ENCODE measurements at regions of chr12 and their contacts with region 1.

Region 1: GRCh38 chr12:10364815-10365622 is 24.8 kb downstream of the KLRK1 start:
- DNase-seq: peak; percentile 40 to 83 (median 76)
- H3K4me3 ChIP-seq: peak overlapping the region; percentile 97
- H3K4me3 Mint-ChIP-seq: no peak overlapping the region
- H3K27ac ChIP-seq: peak overlapping the region; percentile 80
- H3K27ac Mint-ChIP-seq: no peak overlapping the region
- H3K4me1 ChIP-seq: peaks cover 58% of the 10 kb centered on the region
- H3K4me1 Mint-ChIP-seq: peaks cover 24 to 35% (median 25%) of the 10 kb centered on the region in 3 donors
- H3K27me3 ChIP-seq: no peaks in the 10 kb centered on the region
- H3K27me3 Mint-ChIP-seq: no peaks in the 10 kb centered on the region

Region 2: GRCh38 chr12:10235761-10236631 is 129.0 kb before region 1 on chr12:
- CTCF ChIA-PET with region 1: interaction called, 14 read pairs
- POLR2A ChIA-PET with region 1: interaction called, 3 read pairs
- DNase-seq: peak; percentile 12 to 63 (median 37)
- H3K4me3 ChIP-seq: no peak overlapping the region
- H3K4me3 Mint-ChIP-seq: peak overlapping the region; percentile 13 to 60 (median 41)
- H3K27ac ChIP-seq: no peak overlapping the region
- H3K27ac Mint-ChIP-seq: peak overlapping the region in 7 of 8 donors; percentile 28 to 85 (median 71)
- H3K4me1 ChIP-seq: peaks cover 5% of the 10 kb centered on the region
- H3K4me1 Mint-ChIP-seq: peaks cover 21 to 51% (median 45%) of the 10 kb centered on the region in 3 donors
- H3K27me3 ChIP-seq: no peaks in the 10 kb centered on the region
- H3K27me3 Mint-ChIP-seq: no peaks in the 10 kb centered on the region

Region 3: GRCh38 chr12:10385166-10385613 is 20.2 kb after region 1 on chr12:
- CTCF ChIA-PET with region 1: interaction called, 24 read pairs
- POLR2A ChIA-PET with region 1: interaction called, 8 read pairs
- DNase-seq: no peak
- H3K4me3 ChIP-seq: peak overlapping the region; percentile 35
- H3K4me3 Mint-ChIP-seq: peak overlapping the region; percentile 82 to 98 (median 92)
- H3K27ac ChIP-seq: peak overlapping the region; percentile 2
- H3K27ac Mint-ChIP-seq: peak overlapping the region; percentile 60 to 99 (median 87)
- H3K4me1 ChIP-seq: peaks cover 9% of the 10 kb centered on the region
- H3K4me1 Mint-ChIP-seq: peaks cover 49 to 68% (median 50%) of the 10 kb centered on the region in 3 donors
- H3K27me3 ChIP-seq: no peaks in the 10 kb centered on the region
- H3K27me3 Mint-ChIP-seq: peaks cover 0 to 1% of the 10 kb centered on the region in 2 donors

Region 4: GRCh38 chr12:10395390-10395998 is 30.5 kb after region 1 on chr12:
- CTCF ChIA-PET with region 1: interaction called, 24 read pairs
- POLR2A ChIA-PET with region 1: interaction called, 9 read pairs
- DNase-seq: peak in 3 of 5 donors; percentile 52 to 84 (median 79)
- H3K4me3 ChIP-seq: peak overlapping the region; percentile 56
- H3K4me3 Mint-ChIP-seq: peak overlapping the region; percentile 75 to 87 (median 77)
- H3K27ac ChIP-seq: peak overlapping the region; percentile 99
- H3K27ac Mint-ChIP-seq: peak overlapping the region; percentile 97 to 100 (median 98)
- H3K4me1 ChIP-seq: peaks cover 44% of the 10 kb centered on the region
- H3K4me1 Mint-ChIP-seq: peaks cover 70 to 83% (median 77%) of the 10 kb centered on the region in 3 donors
- H3K27me3 ChIP-seq: no peaks in the 10 kb centered on the region
- H3K27me3 Mint-ChIP-seq: no peaks in the 10 kb centered on the region

Region 5: GRCh38 chr12:10409387-10409786 is 44.4 kb after region 1 on chr12 and contains the start of gene KLRC4:
- CTCF ChIA-PET with region 1: interaction called, 23 read pairs
- POLR2A ChIA-PET with region 1: interaction called, 3 read pairs
- DNase-seq: peak in 2 of 5 donors; percentile 55 to 68
- H3K4me3 ChIP-seq: peak within 1 kb of the TSS; percentile 47
- H3K4me3 Mint-ChIP-seq: peak within 1 kb of the TSS; percentile 86 to 98 (median 88)
- H3K27ac ChIP-seq: peak within 1 kb of the TSS; percentile 64
- H3K27ac Mint-ChIP-seq: peak within 1 kb of the TSS; percentile 5 to 94 (median 81)
- H3K4me1 ChIP-seq: no peaks in the 10 kb centered on the region
- H3K4me1 Mint-ChIP-seq: peaks cover 13 to 31% (median 25%) of the 10 kb centered on the region in 3 donors
- H3K27me3 ChIP-seq: no peaks in the 10 kb centered on the region
- H3K27me3 Mint-ChIP-seq: no peaks in the 10 kb centered on the region
- total RNA-seq, gene KLRC4: 10.7 to 16.2 TPM